BJ (cell line): ENCODE measurements at regions of chr13 and their contacts with region 1.

Region 1: DNA sequence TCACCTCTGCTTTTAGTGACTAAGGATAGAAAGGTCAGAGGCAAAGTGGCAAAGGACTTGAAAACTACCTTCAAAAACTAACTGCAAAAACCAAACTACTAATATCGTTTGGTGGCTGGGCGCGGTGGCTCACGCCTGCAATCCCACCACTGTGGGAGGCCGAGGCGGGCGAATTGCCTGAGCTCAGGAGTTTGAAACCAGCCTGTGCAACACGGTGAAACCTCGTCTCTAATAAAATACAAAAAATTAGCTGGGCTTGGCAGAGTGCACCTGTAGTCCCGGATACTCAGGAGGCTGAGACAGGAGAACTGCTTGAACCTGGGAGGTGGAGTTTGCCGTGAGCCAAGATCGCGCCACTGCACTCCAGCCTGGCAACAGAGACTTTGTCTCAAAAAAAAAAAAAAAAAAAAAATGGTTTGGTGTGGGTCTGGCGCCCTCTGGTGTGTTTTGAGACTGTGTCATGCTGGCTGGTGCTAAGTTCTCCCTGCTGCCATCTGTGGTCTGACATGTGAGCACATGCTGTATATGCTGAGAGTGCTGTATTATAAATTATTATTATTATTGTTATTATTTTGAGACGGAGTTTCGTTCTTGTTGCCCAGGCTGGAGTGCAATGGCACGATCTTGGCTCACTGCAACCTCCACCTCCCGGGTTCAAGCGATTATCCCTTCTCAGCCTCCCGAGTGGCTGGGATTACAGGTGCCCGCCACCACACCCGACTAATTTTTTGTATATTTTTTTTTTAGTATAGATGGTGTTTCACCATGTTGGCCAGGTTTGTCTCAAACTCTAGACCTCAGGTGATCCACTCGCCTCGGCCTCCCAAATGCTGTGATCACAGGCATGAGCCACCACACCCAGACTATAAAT is 36.0 kb upstream of the RNF17 start:
- DNase-seq: peak; percentile 10
- H3K4me3 ChIP-seq: no peak overlapping the region
- H3K27me3 ChIP-seq: no peaks in the 10 kb centered on the region; the same call in 1 of the 2 replicates
- CTCF ChIP-seq: peak; percentile 87

Region 2: DNA sequence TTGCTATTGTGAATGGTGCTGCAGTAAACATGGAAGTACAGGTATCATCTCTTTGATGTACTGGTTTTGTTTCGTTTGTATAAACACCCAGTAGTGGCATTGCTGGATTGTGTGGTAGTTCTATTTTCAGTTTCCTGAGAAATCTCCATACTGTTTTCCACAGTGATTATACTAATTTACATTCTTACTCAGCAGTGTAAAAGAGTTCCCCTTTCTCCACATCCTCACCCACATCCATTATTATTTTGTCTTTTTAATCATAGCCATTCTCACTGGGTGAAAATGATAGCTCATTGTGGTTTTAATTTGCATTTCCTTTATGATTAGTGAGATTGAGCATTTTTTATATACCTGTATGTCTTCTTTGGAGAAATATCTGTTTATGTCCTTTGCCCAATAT is 153.1 kb before region 1 on chr13:
- CTCF ChIA-PET with region 1: interaction called, 32 read pairs
- POLR2A ChIA-PET with region 1: no interaction called
- DNase-seq: no peak
- H3K4me3 ChIP-seq: no peak overlapping the region
- H3K27me3 ChIP-seq: no peaks in the 10 kb centered on the region; the same call in 1 of the 2 replicates
- CTCF ChIP-seq: no peak

Region 3: DNA sequence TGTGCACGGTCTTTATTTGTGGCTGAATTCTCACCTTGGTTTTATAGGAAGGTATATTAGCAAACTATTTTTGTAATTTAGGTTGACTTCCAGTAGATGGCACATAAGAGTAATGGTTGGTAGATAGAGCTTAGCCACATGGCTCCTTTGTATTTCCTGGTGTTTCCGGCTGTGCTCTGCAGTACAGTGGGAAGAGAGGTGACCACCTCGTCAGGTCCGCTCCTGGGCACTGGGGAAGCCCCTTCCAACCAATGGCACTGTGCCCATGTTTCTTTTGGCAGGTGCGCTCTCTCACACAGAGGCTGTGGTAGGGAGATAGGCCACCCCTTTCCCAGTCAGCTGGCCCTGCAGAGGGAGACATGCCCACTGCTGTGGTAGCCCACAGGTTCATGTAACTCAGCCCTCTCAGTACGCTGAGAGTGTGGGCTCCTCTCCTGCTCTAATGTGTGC is 122.0 kb before region 1 on chr13:
- CTCF ChIA-PET with region 1: interaction called, 43 read pairs
- POLR2A ChIA-PET with region 1: no interaction called
- DNase-seq: no peak
- H3K4me3 ChIP-seq: no peak overlapping the region
- H3K27me3 ChIP-seq: no peaks in the 10 kb centered on the region
- CTCF ChIP-seq: peak; percentile 24; the same call in 1 of the 2 replicates

Region 4: GRCh38 chr13:24741016-24741662 is 13.2 kb after region 1 on chr13:
- CTCF ChIA-PET with region 1: interaction called, 13 read pairs
- POLR2A ChIA-PET with region 1: no interaction called
- DNase-seq: no peak
- H3K4me3 ChIP-seq: no peak overlapping the region
- H3K27me3 ChIP-seq: peaks cover 4% of the 10 kb centered on the region
- CTCF ChIP-seq: peak; percentile 23; the same call in 1 of the 2 replicates